Adrenal gland (tissue), 19 donors: ENCODE measurements at regions of chr6 and their contacts with region 1.

Region 1: GRCh38 chr6:125153391-125154117 is at the start of gene TPD52L1:
- DNase-seq: peak; percentile 90 to 94 (median 92)
- H3K4me3 ChIP-seq: peak within 1 kb of the TSS; percentile 68 to 97 (median 87)
- H3K27ac ChIP-seq: peak within 1 kb of the TSS; percentile 50 to 91 (median 91)
- H3K4me1 ChIP-seq: peaks cover 32 to 33% of the 10 kb centered on the region in 2 donors
- H3K27me3 ChIP-seq: no peaks in the 10 kb centered on the region
- CTCF ChIP-seq: peak; percentile 74 to 93 (median 80)
- POLR2A ChIP-seq: peak; percentile 40 to 88
- total RNA-seq, gene TPD52L1: 37.0 to 2,041 (median 627) TPM

Region 2: GRCh38 chr6:124854338-124854922 is 299.1 kb before region 1 on chr6:
- intact Hi-C with region 1: no loop called
- DNase-seq: no peak
- H3K4me3 ChIP-seq: no peak overlapping the region
- H3K27ac ChIP-seq: no peak overlapping the region
- H3K4me1 ChIP-seq: no peaks in the 10 kb centered on the region
- H3K27me3 ChIP-seq: no peaks in the 10 kb centered on the region
- CTCF ChIP-seq: peak in 4 of 6 experiments; percentile 19 to 42 (median 30)
- POLR2A ChIP-seq: no peak

Region 3: GRCh38 chr6:125197795-125198269 is 44.3 kb after region 1 on chr6:
- intact Hi-C with region 1: loop called in 1 of 2 experiments (anchors 10 kb)
- DNase-seq: peak; percentile 83 to 97 (median 96)
- H3K4me3 ChIP-seq: peak overlapping the region in 1 of 4 donors; percentile 4
- H3K27ac ChIP-seq: peak overlapping the region; percentile 63 to 85 (median 71)
- H3K4me1 ChIP-seq: peaks cover 86 to 87% of the 10 kb centered on the region in 2 donors
- H3K27me3 ChIP-seq: no peaks in the 10 kb centered on the region
- CTCF ChIP-seq: no peak
- POLR2A ChIP-seq: peak in 1 of 2 donors; percentile 43

Region 4: DNA sequence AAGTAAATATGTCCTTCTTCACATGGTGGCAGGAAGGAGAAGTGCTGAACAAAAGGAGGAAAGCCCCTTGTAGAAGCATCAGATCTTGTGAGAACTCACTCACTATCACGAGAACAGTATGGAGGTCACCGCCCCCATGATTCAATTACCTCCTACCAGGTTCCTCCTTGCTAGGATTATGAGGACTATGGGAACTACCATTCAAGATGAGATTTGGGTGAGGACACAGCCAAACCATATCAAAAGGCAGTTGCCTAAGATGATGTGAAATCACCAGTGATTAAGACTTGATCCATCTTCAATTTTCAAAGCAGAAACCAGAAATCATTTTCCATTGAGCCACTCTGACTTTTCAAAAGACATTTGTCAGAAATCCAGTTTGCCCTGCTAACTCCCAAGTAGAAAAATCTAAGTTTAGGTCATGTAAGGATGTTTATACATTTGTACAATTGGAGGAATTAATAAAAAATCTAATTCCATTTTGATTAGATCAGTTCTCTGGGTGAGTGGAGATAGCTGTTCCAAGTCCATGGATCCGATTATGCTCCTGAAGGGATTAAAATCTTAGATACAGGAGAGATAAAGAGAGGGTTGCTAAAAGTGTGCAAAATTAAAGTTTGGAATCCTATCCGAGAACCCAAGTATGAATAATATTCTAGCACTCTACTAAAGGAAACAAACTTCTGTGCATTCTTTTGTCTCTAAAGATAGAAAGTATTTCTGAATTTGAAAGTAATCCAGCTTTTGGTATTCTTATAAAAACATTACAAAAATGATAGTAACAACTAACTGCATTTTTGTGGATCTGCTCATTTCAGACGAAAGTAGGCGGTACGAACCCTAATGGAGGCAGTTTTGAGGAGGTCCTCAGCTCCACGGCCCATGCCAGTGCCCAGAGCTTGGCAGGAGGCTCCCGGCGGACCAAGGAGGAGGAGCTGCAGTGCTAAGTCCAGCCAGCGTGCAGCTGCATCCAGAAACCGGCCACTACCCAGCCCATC is 108.8 kb after region 1 on chr6:
- intact Hi-C with region 1: loop called in 1 of 2 experiments (anchors 10 kb)
- DNase-seq: no peak
- H3K4me3 ChIP-seq: no peak overlapping the region
- H3K27ac ChIP-seq: peak overlapping the region in 2 of 5 donors; percentile 5 to 32
- H3K4me1 ChIP-seq: peaks cover 0 to 8% of the 10 kb centered on the region in 2 donors
- H3K27me3 ChIP-seq: no peaks in the 10 kb centered on the region
- CTCF ChIP-seq: no peak
- POLR2A ChIP-seq: no peak

Region 5: GRCh38 chr6:125301435-125302391 is 148.2 kb after region 1 on chr6 and contains the start of gene HDDC2:
- intact Hi-C with region 1: loop called (anchors 5 to 10 kb)
- DNase-seq: peak; percentile 75 to 82 (median 78)
- H3K4me3 ChIP-seq: peak within 1 kb of the TSS; percentile 34 to 81 (median 58)
- H3K27ac ChIP-seq: peak within 1 kb of the TSS; percentile 43 to 94 (median 89)
- H3K4me1 ChIP-seq: peaks cover 25 to 34% of the 10 kb centered on the region in 2 donors
- H3K27me3 ChIP-seq: no peaks in the 10 kb centered on the region
- CTCF ChIP-seq: peak in 1 of 6 experiments; percentile 25
- POLR2A ChIP-seq: peak; percentile 46 to 80
- total RNA-seq, gene HDDC2: 94.2 to 166 (median 116) TPM

Region 6: GRCh38 chr6:125307150-125307838 is 153.7 kb after region 1 on chr6:
- intact Hi-C with region 1: loop called (anchors 5 to 10 kb)
- DNase-seq: no peak
- H3K4me3 ChIP-seq: no peak overlapping the region
- H3K27ac ChIP-seq: no peak overlapping the region
- H3K4me1 ChIP-seq: no peaks in the 10 kb centered on the region
- H3K27me3 ChIP-seq: no peaks in the 10 kb centered on the region
- CTCF ChIP-seq: no peak
- POLR2A ChIP-seq: no peak